Heart left ventricle (tissue), 16 donors: ENCODE measurements at regions of chr9 and their contacts with region 1.

Region 1: DNA sequence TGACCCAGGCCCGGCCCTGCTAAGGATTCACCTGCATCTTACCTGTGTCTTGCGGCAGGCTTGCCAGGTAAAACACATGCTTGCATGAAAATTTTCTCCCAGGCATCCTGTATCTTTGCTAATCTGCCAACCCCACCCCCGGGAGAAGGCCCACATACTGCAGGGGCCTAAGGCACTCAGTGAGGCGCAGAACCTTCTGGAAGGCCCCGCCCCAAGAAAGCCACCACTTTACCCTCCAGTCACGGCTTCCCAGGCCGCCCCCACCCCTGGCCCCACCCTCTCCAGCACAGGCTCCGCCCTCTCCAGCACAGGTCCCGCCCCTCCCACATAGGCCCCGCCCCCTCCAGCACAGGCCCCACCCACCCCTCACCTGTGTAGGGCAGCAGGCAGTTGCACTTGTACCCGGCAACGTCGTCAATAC is 29.8 kb upstream of the SEC16A start:
- DNase-seq: no peak
- ATAC-seq: peak in 3 of 4 donors; percentile 11 to 36 (median 21)
- H3K4me3 ChIP-seq: peak overlapping the region in 9 of 12 donors; percentile 8 to 42 (median 28)
- H3K27ac ChIP-seq: peak overlapping the region; percentile 66 to 99 (median 94)
- H3K4me1 ChIP-seq: peaks cover 6 to 43% (median 30%) of the 10 kb centered on the region in 12 donors
- H3K27me3 ChIP-seq: no peaks in the 10 kb centered on the region
- CTCF ChIP-seq: no peak
- POLR2A ChIP-seq: no peak

Region 2: GRCh38 chr9:136527721-136528691 is 15.3 kb after region 1 on chr9:
- intact Hi-C with region 1: loop called in 1 of 10 experiments (anchors 1 kb)
- DNase-seq: no peak
- ATAC-seq: no peak
- H3K4me3 ChIP-seq: no peak overlapping the region
- H3K27ac ChIP-seq: peak overlapping the region; percentile 30 to 85 (median 76)
- H3K4me1 ChIP-seq: peaks cover 26 to 92% (median 74%) of the 10 kb centered on the region in 12 donors
- H3K27me3 ChIP-seq: no peaks in the 10 kb centered on the region
- CTCF ChIP-seq: no peak
- POLR2A ChIP-seq: no peak